ENCODE measurements at regions of chr7 and their contacts with region 1.

Region 1: GRCh38 chr7:93723424-93724124 is 149.1 kb upstream of the CALCR start:
- DNase-seq: no peak
- ATAC-seq: no peak

Region 2: GRCh38 chr7:93704217-93704616 is 19.4 kb before region 1 on chr7:
- intact Hi-C with region 1: no loop called
- DNase-seq: no peak
- ATAC-seq: no peak

Region 3: GRCh38 chr7:94338921-94339371 is 615.4 kb after region 1 on chr7:
- intact Hi-C with region 1: no loop called
- DNase-seq: no peak
- ATAC-seq: no peak

Region 4: DNA sequence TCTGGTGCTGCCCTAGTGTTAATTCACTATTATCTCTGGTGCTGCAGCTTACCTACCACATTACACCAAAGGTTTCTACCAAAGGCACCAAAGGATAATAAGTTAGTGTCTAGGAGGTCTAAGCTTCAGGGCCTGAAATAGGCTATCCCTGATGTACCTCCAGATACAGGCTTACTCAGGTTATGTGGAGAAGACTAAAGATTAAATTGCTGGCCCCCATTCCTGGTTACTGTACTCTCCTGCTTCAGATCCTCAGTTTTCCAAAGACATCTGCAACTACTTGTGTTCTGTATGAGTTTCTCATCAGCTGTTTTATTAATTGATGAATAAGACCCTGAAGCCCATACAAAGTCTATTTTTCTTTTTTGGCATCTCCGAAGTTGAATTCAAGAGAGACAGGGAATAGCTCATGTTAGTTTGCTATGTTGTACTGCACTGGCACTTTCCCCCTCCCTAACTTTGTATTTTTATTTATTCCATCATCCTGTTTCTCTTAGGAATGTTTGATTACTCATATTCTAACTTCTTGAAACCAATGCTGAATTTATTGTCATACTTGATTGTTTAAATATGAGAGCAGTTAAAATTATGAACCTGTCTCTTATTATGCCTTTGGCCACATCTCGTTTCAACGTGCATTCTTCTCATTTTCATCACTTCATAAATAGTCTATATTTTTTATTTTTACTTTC is 1514.8 kb after region 1 on chr7:
- intact Hi-C with region 1: loop called (anchors 5 kb)
- DNase-seq: no peak
- ATAC-seq: no peak

Region 5: DNA sequence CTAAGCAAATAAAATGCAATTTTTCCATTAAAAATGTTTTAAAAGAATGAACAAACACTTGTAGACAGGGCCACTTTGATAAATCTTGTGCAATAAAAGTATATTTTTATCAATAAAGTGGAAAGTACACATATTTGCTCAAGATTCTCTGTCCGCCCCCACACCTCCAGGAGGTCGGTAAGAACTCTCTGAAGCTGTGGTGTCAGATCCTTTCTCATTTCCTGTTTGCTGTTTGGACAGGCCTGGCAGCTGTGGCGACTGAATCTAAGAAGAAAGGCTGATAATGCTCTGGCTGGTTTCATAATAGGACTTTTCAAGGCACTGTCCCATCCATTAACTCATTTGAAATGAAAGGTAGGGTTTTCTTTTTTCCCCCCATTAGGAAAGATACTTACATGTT is 1746.9 kb after region 1 on chr7:
- intact Hi-C with region 1: no loop called
- DNase-seq: no peak
- ATAC-seq: no peak